Mammary epithelial cell (primary cell): ENCODE measurements at regions of chr1 and their contacts with region 1.

Region 1: DNA sequence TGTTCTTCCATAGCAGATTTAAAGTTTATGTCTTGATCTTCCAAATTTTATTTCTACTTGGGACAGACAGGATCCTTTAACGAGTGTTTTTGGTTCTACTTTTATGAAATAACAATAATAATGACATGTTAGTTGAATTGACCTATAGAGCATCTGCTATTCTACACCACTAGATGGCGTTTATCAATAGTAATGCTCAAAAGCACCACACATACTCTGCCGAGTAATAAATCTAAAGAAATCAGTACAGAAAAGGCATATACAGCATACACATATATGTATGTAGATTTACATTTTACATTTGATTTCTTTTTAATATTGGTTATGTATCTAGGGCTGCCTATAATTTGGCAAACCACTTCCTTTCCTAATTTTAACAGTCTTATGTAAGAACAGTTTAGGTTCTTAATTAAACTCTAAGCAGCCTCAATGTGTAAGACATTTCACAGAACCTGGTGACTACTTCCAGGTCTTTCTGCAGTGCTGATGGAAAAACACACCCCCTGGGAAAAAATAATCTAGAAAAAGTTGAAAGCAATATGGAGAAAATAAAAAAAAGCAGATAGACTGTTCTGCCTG is 5.9 kb upstream of the SIPA1L2 start:
- DNase-seq: peak; percentile 21
- H3K4me3 ChIP-seq: no peak overlapping the region
- H3K27ac ChIP-seq: no peak overlapping the region
- H3K4me1 ChIP-seq: peaks cover 3% of the 10 kb centered on the region
- H3K27me3 ChIP-seq: no peaks in the 10 kb centered on the region
- CTCF ChIP-seq: peak; percentile 69 to 95

Region 2: GRCh38 chr1:232578651-232579195 is 57.1 kb before region 1 on chr1:
- CTCF ChIA-PET with region 1: no interaction called
- dilution Hi-C with region 1: no loop called
- in situ Hi-C with region 1: no loop called
- intact Hi-C with region 1: no loop called
- DNase-seq: no peak
- H3K4me3 ChIP-seq: no peak overlapping the region
- H3K27ac ChIP-seq: no peak overlapping the region
- H3K4me1 ChIP-seq: no peaks in the 10 kb centered on the region
- H3K27me3 ChIP-seq: no peaks in the 10 kb centered on the region
- CTCF ChIP-seq: no peak

Region 3: DNA sequence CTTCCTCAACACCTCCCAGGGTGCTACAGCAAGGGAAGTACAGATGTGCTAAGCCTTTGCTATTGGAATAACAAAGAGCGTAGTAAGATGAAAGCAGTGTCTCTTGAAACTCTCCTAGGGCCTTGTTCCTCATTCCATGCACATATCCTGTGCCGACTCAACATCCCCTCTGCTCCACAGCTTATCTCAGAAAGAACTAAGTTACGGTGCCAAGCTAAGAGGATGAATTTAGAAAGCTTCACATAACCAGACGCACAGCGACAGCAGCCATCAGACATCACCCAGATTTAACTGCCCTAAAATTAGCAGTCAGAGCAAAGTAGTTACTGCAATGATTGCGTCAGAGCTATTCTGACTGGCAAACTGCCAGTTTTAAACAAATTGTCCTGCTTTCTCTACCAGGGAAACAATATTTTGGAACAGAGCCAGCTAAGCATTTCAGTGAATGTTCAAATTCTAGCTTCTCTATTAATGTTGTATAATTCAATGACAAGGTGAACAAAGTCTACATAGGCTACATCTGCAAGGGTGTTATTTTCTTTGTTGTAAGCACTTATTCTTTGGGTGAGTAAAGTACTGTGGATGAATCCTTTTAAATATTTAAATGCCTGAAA is 15.4 kb before region 1 on chr1:
- CTCF ChIA-PET with region 1: no interaction called
- dilution Hi-C with region 1: no loop called
- in situ Hi-C with region 1: no loop called
- intact Hi-C with region 1: no loop called
- DNase-seq: peak; percentile 45
- H3K4me3 ChIP-seq: no peak overlapping the region
- H3K27ac ChIP-seq: no peak overlapping the region
- H3K4me1 ChIP-seq: no peaks in the 10 kb centered on the region
- H3K27me3 ChIP-seq: no peaks in the 10 kb centered on the region
- CTCF ChIP-seq: no peak

Region 4: DNA sequence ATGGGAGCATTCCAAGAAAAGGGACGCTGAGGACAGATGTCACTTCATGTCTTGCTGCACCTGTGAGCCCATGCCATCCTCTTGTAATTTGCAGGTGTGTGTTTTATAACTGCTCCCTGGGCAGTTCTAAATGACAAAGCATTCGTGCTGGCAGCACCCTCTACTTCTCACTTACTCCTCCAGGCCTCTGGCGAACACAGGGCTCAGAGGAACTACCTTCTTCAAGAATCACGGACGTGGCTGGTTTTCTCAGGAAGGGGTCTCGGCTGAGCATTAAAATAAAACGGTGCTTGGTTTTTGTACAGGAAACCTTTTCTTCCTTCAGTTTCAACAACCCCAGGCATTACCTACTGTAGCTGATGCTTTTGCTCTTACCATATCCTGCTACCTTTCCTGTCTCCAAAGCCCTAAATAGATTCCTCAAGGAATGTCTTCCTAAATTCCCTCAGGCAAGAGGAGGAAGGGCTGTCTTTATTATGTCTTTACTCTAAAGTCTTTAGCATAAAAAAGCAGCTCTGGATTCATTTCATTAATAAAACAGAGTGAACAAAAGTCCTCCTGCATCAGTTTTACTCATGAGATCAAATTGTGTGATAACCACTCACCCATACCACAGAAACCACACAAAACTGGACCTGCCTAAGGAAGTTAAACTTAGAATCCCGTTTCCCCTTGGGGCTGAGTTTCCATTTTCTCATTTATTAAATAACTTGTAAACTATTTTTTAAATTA is 90.3 kb after region 1 on chr1:
- CTCF ChIA-PET with region 1: no interaction called
- dilution Hi-C with region 1: no loop called
- in situ Hi-C with region 1: no loop called
- intact Hi-C with region 1: loop called (anchors 5 kb)
- DNase-seq: peak; percentile 91
- H3K4me3 ChIP-seq: no peak overlapping the region
- H3K27ac ChIP-seq: no peak overlapping the region
- H3K4me1 ChIP-seq: peaks cover 15% of the 10 kb centered on the region
- H3K27me3 ChIP-seq: no peaks in the 10 kb centered on the region
- CTCF ChIP-seq: no peak

Region 5: GRCh38 chr1:232793944-232794343 is 158.1 kb after region 1 on chr1:
- CTCF ChIA-PET with region 1: interaction called, 3 read pairs
- dilution Hi-C with region 1: no loop called
- in situ Hi-C with region 1: loop called in 1 of 2 experiments (anchors 10 kb)
- intact Hi-C with region 1: loop called (anchors 1 kb)
- DNase-seq: peak; percentile 47
- H3K4me3 ChIP-seq: no peak overlapping the region
- H3K27ac ChIP-seq: no peak overlapping the region
- H3K4me1 ChIP-seq: no peaks in the 10 kb centered on the region
- H3K27me3 ChIP-seq: peaks cover 1% of the 10 kb centered on the region
- CTCF ChIP-seq: peak in 1 of 2 donors; percentile 51

Region 6: GRCh38 chr1:232868793-232869491 is 233.1 kb after region 1 on chr1:
- CTCF ChIA-PET with region 1: no interaction called
- dilution Hi-C with region 1: no loop called
- in situ Hi-C with region 1: no loop called
- intact Hi-C with region 1: loop called (anchors 2 kb)
- DNase-seq: peak; percentile 90
- H3K4me3 ChIP-seq: no peak overlapping the region
- H3K27ac ChIP-seq: peak overlapping the region; percentile 74
- H3K4me1 ChIP-seq: peaks cover 30% of the 10 kb centered on the region
- H3K27me3 ChIP-seq: no peaks in the 10 kb centered on the region
- CTCF ChIP-seq: no peak

Region 7: DNA sequence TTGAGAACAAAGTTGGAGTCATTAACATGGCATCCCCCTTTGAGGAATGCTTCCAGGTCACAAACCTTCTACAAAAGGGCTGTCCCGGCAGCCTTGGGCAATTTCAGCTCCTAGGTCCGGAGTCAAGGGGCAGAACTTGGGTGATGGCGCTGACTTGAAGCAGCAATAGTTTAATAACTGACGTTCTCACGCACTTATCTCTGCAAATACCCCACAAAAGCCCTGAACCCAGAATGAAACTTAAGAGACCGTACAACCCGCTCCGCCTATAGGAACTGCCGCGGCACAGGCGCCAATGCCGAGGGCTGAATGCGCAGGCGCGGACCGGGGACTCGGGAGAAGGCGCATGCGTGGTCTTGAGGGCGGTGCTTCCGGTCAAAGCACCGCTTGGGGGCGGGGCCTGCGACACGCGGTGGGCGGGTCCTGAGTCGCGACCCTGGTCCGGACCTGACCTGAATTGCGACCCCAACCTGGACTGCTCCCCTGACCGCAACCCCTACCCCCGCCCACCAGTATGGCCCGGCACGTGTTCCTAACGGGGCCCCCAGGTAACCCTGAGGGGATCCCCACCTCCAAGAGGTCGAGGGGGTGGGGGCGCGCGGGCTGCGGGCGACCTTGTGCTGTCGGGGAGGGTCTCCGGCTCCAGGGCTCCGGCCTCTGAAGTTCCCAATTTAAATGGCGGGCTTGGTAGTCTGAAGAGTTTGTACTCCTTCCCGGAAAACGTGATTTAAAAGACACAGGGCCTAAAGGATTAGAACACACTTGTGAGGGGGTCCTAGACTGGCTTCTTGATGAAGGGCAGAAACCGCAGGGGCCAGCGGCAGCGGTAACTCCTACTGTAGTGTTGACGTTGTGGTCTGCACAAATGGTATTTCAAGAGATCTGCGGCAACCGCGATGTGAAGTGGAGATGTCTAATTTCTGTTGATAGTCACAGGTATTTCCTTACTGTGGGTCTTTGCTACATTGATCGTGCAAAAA is 314.6 kb after region 1 on chr1 and contains the start of gene NTPCR:
- CTCF ChIA-PET with region 1: interaction called, 10 read pairs
- dilution Hi-C with region 1: no loop called
- in situ Hi-C with region 1: loop called (anchors 5 to 25 kb)
- intact Hi-C with region 1: loop called (anchors 1 kb)
- DNase-seq: peak; percentile 86
- H3K4me3 ChIP-seq: peak within 1 kb of the TSS; percentile 78 to 94 (median 86)
- H3K27ac ChIP-seq: peak within 1 kb of the TSS; percentile 64
- H3K4me1 ChIP-seq: peaks cover 26% of the 10 kb centered on the region
- H3K27me3 ChIP-seq: no peaks in the 10 kb centered on the region
- CTCF ChIP-seq: peak in 1 of 2 donors; percentile 15
- total RNA-seq, gene NTPCR: 15.3 to 47.0 TPM

Region 8: DNA sequence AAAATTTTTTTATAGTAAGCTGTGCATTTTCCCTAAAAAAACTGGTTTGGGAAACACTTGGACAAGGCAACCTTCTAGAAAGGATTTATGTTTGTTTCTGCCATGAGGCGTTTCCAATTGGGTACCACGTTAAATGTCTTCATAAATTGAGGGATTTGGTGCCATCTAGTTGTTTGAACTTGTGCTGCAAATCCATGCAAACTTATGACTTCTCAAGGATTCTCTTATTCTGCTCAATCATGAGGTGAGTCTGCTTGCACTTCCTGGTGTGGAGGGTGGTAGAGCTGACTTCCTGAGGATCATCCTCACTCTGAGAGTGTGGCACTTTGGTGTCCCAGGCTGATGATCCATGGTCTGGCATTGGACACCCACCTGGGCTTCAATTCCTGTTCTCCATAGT is 536.4 kb after region 1 on chr1:
- CTCF ChIA-PET with region 1: no interaction called
- dilution Hi-C with region 1: no loop called
- in situ Hi-C with region 1: no loop called
- intact Hi-C with region 1: loop called (anchors 5 kb)
- DNase-seq: no peak
- H3K4me3 ChIP-seq: no peak overlapping the region
- H3K27ac ChIP-seq: no peak overlapping the region
- H3K4me1 ChIP-seq: no peaks in the 10 kb centered on the region
- H3K27me3 ChIP-seq: no peaks in the 10 kb centered on the region
- CTCF ChIP-seq: no peak

Region 9: GRCh38 chr1:233240829-233241682 is 605.2 kb after region 1 on chr1:
- CTCF ChIA-PET with region 1: no interaction called
- dilution Hi-C with region 1: no loop called
- in situ Hi-C with region 1: loop called in 1 of 2 experiments (anchors 10 kb)
- intact Hi-C with region 1: loop called (anchors 2 kb)
- DNase-seq: no peak
- H3K4me3 ChIP-seq: no peak overlapping the region
- H3K27ac ChIP-seq: no peak overlapping the region
- H3K4me1 ChIP-seq: peaks cover 4% of the 10 kb centered on the region
- H3K27me3 ChIP-seq: no peaks in the 10 kb centered on the region
- CTCF ChIP-seq: peak; percentile 34 to 67